ENCODE measurements at regions of chr19 and their contacts with region 1.

Region 1: DNA sequence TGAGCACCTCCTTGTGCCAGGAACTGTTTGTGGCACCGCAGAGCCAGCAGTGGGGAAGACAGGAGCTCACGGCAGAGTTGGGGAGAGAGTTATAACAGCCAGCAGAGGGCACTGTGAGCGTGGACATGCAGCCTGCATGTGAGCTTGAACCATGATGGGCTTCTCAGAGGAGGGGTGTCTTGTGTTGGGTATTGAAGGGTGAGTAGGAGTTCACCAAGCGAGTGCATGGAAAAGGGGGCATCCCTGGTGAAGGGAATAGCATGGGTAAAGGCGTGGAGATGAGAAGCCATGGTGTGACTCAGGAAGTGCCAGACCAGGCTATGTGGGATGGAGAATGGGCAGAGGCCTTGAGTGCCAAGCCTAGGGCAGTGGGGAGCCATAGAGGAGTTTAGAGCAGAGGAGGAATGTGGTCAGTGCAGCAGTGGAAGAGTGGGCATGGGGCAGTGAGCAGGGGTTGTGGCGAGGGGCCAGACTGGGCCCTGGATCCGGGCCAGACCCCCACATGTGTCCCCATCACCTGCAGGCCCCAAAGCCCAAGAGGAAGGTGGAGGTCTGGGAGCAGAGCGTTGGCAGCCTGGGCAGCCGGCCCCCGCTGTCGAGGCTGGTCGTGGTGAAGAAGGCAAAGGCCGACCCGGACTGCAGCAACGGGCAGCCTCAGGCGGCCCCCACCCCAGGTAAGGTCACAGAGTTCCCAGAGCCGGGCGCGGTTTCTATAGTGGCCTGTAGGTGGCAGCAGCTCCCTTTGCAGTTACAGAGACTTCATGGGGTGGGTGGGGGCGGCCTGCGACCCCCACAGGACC is 11.8 kb upstream of the SHD start:
- DNase-seq: peak; percentile 66
- H3K4me3 Mint-ChIP-seq: no peak overlapping the region
- H3K27ac Mint-ChIP-seq: no peak overlapping the region
- H3K4me1 Mint-ChIP-seq: peaks cover 18% of the 10 kb centered on the region
- H3K27me3 Mint-ChIP-seq: no peaks in the 10 kb centered on the region

Region 2: DNA sequence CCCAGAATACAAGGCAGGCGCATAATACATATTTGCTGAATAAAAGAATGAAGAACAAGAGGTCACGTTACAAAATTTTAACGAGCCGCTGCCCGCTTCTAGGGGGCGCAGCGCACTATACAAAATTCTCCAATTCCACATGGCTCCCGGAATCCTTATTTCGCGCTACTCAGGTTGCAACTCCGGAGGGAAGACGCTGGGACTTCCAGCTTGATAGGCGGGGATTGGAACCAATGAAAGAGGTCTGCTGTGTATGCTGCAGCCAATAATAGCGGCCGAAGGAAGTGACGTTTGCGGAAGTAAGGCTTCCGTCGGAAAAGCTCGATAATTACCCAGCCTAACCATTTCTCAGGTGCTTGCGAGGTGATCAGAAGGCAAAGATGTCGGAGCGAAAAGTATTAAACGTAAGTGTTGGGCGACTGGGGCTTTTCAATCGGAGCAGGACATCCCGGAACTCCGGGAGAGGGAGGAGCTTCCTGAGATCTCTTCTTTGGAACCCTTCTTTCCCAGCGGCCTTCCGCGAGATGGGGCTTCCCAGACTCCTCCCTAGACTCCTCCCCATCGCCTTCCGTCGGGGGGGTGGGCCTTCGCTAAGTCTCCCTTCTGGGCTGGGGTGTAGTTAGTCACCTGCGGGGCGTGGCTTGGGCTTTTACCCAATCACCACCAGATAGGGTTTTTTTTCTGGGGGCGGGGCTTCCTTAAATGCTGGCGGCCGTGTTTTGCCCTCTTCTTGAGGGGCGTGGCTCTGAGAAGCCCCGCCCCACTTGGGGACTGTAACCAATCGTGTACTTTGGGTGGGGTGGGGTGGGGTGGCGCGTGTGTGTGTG is 20.3 kb before region 1 on chr19 and contains the start of gene YJU2:
- CTCF ChIA-PET with region 1: interaction called, 10 read pairs
- POLR2A ChIA-PET with region 1: interaction called, 3 read pairs
- DNase-seq: peak; percentile 99
- H3K4me3 Mint-ChIP-seq: peak within 1 kb of the TSS; percentile 80
- H3K27ac Mint-ChIP-seq: peak within 1 kb of the TSS; percentile 89
- H3K4me1 Mint-ChIP-seq: peaks cover 19% of the 10 kb centered on the region
- H3K27me3 Mint-ChIP-seq: peaks cover 2% of the 10 kb centered on the region
- total RNA-seq, gene YJU2: 21.7 to 25.3 TPM

Region 3: DNA sequence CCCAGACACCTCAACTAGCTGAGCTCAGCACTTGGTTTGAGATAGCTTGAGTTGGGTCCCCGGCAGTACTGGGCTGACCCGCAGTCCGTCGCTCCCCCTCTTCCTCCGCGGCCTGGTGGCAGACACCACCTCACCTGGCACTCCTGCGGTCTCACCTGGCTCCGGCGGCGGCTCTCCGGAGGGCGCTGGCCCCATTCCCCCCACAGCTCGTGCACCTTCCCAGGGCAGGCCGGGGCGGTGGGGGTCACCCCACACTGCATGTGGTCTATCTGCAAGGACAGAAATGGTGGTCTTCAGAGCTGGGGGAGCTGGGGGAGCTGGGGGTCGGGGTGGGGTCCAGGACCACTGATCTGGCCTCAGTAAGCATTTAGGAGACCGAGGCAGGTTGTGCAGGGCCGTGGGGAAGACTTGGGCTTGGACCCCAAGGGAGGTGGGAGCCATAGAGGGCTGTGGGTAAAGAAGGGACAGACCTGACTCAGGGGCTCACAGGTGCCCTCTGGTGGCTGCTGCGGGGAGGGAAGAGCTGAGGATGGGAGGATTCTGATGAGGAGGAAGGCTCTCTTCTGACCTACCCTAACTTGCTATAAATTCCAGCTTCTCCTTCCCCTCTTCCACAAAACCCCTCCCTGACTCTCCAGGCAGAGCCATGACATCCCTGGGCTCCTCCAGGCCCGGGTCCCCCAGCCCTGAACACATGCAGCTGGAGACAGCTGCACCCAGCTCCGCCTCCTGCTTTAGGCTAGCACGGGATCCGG is 257.7 kb after region 1 on chr19:
- CTCF ChIA-PET with region 1: interaction called, 21 read pairs
- POLR2A ChIA-PET with region 1: interaction called, 4 read pairs
- DNase-seq: peak; percentile 75
- H3K4me3 Mint-ChIP-seq: no peak overlapping the region
- H3K27ac Mint-ChIP-seq: no peak overlapping the region
- H3K4me1 Mint-ChIP-seq: no peaks in the 10 kb centered on the region
- H3K27me3 Mint-ChIP-seq: peaks cover 1% of the 10 kb centered on the region

Measured in activated CD4-positive, alpha-beta memory T cell treated with anti-CD3 and anti-CD28 coated beads, Interleukin-2, amount 10 ng/mL, durations not matched to agents 7 days and 5 days (primary cell).